ENCODE measurements at regions of chr5 and their contacts with region 1.

Region 1: GRCh38 chr5:1652596-1653345 is 129.0 kb upstream of the LPCAT1 start:
- DNase-seq: peak in 1 of 5 donors; percentile 14
- H3K4me3 ChIP-seq: no peak overlapping the region
- H3K27ac ChIP-seq: no peak overlapping the region
- H3K4me1 ChIP-seq: no peaks in the 10 kb centered on the region
- H3K27me3 ChIP-seq: no peaks in the 10 kb centered on the region
- CTCF ChIP-seq: no peak
- EP300 ChIP-seq: no peak
- POLR2A ChIP-seq: no peak

Region 2: GRCh38 chr5:513216-514100 is 1139.3 kb before region 1 on chr5:
- intact Hi-C with region 1: no loop called
- DNase-seq: no peak
- H3K4me3 ChIP-seq: no peak overlapping the region
- H3K27ac ChIP-seq: no peak overlapping the region
- H3K4me1 ChIP-seq: no peaks in the 10 kb centered on the region
- H3K27me3 ChIP-seq: no peaks in the 10 kb centered on the region
- CTCF ChIP-seq: no peak
- EP300 ChIP-seq: no peak
- POLR2A ChIP-seq: no peak

Region 3: DNA sequence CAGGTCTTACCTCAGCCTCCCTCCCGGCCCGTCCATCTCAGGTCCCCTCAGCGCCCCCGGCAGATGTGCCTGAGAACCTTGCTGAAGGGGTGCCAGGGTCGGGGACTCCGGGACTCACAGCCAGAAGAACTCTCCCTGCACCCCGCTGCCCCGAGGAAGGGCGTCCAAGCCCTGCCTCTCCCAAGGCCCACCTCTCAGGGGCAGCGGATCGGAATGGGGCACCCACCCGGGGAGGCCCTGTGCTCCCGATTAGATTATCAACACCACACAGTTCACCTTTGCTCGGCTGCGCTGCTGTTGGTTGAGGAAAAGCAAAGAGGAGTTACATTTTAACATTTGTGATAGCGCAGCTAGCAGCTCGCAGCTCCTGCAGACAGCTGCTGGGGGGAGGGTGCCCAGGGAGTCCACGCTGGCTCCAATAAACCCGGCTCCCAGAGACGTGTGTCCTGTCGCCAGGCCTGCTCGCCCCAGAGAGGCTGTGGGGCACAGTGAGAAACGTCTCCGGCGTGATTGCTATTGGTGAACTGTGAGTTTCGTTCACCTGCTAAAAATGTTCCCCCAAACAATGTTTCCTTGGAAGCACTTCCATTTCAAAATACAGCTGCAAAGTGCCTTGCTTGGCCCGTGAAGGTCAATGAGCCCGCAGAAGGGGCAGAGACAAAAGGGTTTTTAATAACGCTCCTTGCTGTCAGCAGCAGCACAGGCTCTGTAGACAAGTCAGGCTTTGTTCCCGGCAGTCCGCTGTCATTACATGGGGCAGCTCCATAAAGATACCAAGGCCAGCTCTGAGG is 469.9 kb before region 1 on chr5:
- intact Hi-C with region 1: loop called in 2 of 4 experiments (anchors 10 kb)
- DNase-seq: no peak
- H3K4me3 ChIP-seq: no peak overlapping the region
- H3K27ac ChIP-seq: no peak overlapping the region
- H3K4me1 ChIP-seq: no peaks in the 10 kb centered on the region
- H3K27me3 ChIP-seq: no peaks in the 10 kb centered on the region
- CTCF ChIP-seq: no peak
- EP300 ChIP-seq: no peak
- POLR2A ChIP-seq: no peak

Measured in ovary (tissue), 10 donors.